A673 (cell line): ENCODE measurements at regions of chr11 and their contacts with region 1.

Region 1: DNA sequence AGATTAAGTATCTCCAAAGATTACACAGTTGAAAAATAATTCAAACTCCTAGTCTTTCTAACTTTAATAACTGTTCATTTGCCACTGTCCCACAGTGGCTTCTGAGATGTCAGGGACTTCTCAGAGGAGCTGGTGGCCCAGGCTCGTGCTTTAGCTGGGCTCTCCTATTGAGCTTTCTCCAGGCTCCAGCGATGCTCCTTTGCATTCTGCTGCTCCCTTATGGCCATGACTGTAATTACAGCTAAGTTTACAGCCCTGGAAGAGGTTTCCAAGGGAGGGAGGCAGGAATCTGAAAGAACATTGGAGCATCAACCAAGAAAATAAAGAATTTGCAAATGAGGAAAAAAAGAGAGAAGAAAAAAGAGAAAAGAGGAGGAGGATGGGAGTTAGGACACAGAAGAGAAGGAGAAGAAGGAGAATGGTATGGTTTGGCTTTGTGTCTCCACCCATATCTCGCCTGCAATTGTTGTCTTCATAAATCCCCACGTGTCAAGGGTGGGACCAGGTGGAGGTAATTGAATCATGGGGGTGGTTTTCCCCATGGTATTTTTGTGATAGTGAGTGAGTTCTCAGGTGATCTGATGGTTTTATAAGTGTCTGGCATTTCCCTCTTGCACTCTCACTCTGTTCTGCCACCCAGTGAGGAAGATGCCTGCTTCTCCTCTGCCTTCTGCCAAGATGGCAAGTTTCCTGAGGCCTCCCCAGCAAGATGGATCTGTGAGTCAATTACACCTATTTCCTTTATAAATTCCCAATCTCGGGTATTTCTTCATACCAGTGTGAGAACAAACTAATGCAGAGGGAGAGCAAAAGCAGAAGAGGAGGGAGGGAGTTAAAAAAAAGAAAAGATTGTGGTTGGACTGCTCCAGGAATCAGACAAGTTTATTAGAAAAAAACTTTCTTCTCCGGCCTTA is 857.0 kb downstream of the KCNA4 start:
- DNase-seq: peak; percentile 98
- H3K4me3 ChIP-seq: no peak overlapping the region
- H3K27ac ChIP-seq: no peak overlapping the region
- H3K4me1 ChIP-seq: peaks cover 35% of the 10 kb centered on the region
- H3K27me3 ChIP-seq: no peaks in the 10 kb centered on the region
- CTCF ChIP-seq: peak; percentile 100

Region 2: GRCh38 chr11:27698872-27699474 is 1460.8 kb before region 1 on chr11:
- CTCF ChIA-PET with region 1: interaction called, 23 read pairs
- POLR2A ChIA-PET with region 1: interaction called, 3 read pairs
- intact Hi-C with region 1: loop called (anchors 1 kb)
- DNase-seq: peak; percentile 97
- H3K4me3 ChIP-seq: peak overlapping the region; percentile 40
- H3K27ac ChIP-seq: no peak overlapping the region
- H3K4me1 ChIP-seq: peaks cover 27% of the 10 kb centered on the region
- H3K27me3 ChIP-seq: peaks cover 97% of the 10 kb centered on the region
- CTCF ChIP-seq: peak; percentile 100

Region 3: GRCh38 chr11:27839226-27839870 is 1320.5 kb before region 1 on chr11:
- CTCF ChIA-PET with region 1: interaction called, 4 read pairs
- POLR2A ChIA-PET with region 1: no interaction called
- intact Hi-C with region 1: loop called (anchors 5 kb)
- DNase-seq: peak; percentile 79
- H3K4me3 ChIP-seq: no peak overlapping the region
- H3K27ac ChIP-seq: no peak overlapping the region
- H3K4me1 ChIP-seq: no peaks in the 10 kb centered on the region
- H3K27me3 ChIP-seq: peaks cover 57% of the 10 kb centered on the region
- CTCF ChIP-seq: peak; percentile 88

Region 4: DNA sequence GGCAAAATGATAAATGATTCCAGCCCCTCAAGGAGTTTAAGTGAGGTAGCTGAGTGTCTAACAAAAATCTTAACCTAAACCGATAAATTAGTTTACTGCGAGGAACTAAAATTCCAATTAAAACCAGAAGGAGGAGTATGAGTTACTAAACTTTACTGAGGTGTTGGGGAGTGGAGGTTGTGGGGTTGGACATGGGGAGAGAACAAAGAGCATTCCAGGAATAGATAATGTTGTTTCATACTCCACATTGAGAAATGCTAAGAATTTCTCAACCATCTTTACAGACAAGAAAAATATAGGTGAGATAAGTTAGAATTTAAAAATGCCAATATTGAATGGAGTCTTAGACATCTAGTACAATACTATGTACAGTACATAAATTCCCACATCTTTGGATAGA is 563.0 kb before region 1 on chr11:
- CTCF ChIA-PET with region 1: interaction called, 10 read pairs
- POLR2A ChIA-PET with region 1: no interaction called
- intact Hi-C with region 1: no loop called
- DNase-seq: no peak
- H3K4me3 ChIP-seq: no peak overlapping the region
- H3K27ac ChIP-seq: no peak overlapping the region
- H3K4me1 ChIP-seq: no peaks in the 10 kb centered on the region
- H3K27me3 ChIP-seq: peaks cover 48% of the 10 kb centered on the region
- CTCF ChIP-seq: no peak; the same call in 1 of the 2 replicates

Region 5: DNA sequence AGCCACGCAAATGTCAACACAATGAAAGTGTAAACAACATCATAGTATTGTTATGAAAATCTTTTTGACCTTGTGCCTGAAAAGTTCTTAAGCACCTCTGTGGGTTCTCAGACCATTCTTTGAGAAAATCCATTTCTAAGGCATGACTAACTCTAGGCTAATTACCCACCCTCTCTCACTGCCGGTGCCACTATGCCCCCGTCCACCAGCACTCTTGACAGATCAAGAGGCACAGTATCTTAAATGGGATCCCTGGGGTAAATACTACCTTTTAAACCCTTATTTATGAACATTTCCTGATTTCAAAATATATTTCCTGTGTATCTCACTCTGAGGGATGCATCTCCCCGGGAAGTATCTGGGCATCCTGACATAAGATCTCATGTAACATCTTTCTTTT is 444.1 kb before region 1 on chr11:
- CTCF ChIA-PET with region 1: no interaction called
- POLR2A ChIA-PET with region 1: no interaction called
- intact Hi-C with region 1: loop called (anchors 5 kb)
- DNase-seq: peak; percentile 97
- H3K4me3 ChIP-seq: no peak overlapping the region
- H3K27ac ChIP-seq: no peak overlapping the region
- H3K4me1 ChIP-seq: peaks cover 18% of the 10 kb centered on the region
- H3K27me3 ChIP-seq: no peaks in the 10 kb centered on the region
- CTCF ChIP-seq: no peak

Region 6: GRCh38 chr11:28951191-28951590 is 208.6 kb before region 1 on chr11:
- CTCF ChIA-PET with region 1: no interaction called
- POLR2A ChIA-PET with region 1: no interaction called
- intact Hi-C with region 1: no loop called
- DNase-seq: no peak
- H3K4me3 ChIP-seq: no peak overlapping the region
- H3K27ac ChIP-seq: no peak overlapping the region
- H3K4me1 ChIP-seq: no peaks in the 10 kb centered on the region
- H3K27me3 ChIP-seq: no peaks in the 10 kb centered on the region
- CTCF ChIP-seq: no peak

Region 7: GRCh38 chr11:28981381-28981780 is 178.4 kb before region 1 on chr11:
- CTCF ChIA-PET with region 1: interaction called, 4 read pairs
- POLR2A ChIA-PET with region 1: no interaction called
- intact Hi-C with region 1: loop called (anchors 5 kb)
- DNase-seq: peak; percentile 95
- H3K4me3 ChIP-seq: no peak overlapping the region
- H3K27ac ChIP-seq: no peak overlapping the region
- H3K4me1 ChIP-seq: peaks cover 14% of the 10 kb centered on the region
- H3K27me3 ChIP-seq: peaks cover 45% of the 10 kb centered on the region
- CTCF ChIP-seq: no peak

Region 8: DNA sequence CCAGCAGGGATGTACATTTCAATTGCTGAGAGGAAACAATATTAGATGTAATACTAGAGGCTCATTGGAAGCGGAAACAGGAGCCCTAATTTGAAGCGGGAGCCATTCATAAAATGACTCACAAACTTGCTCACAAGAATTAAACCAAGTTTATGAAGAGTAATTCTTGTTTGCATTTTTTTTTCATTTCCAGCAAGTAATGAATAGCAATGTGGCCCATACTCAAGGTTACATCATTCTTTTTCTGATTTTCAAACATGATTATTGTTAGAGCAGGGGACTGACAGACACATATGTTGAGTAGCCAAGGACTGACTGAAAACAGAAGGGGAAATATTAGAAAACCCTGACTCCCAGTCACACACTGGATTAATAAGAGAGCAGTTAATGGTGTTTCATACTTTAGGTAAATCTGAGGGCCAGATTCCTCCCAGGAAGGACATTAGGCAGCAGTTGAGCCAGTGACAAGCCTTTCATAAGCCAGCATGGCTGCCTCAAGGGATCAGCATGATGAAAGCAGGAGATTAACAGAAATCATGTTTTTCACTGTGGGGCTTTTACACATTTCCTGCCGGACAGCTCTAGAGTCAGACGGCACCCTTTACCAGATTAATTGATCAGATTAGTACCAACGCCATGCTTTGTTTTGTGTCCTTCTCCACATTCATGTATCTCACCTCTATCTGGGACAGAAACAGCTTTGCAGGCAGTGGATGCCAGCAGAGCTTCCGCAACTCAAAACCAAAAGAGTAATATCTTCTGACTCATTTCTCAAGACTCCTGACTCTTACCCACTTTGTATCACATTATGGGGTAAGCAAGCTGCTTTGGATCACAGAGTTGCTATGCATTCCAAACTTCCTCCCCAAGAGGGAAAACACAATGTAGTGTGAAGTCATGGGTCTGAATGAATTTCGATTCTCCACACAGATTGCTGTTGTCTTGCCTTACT is 25.4 kb after region 1 on chr11:
- CTCF ChIA-PET with region 1: interaction called, 7 read pairs
- POLR2A ChIA-PET with region 1: interaction called, 3 read pairs
- intact Hi-C with region 1: loop called (anchors 1 kb)
- DNase-seq: peak; percentile 100
- H3K4me3 ChIP-seq: peak overlapping the region; percentile 17
- H3K27ac ChIP-seq: peak overlapping the region; percentile 95
- H3K4me1 ChIP-seq: peaks cover 51% of the 10 kb centered on the region
- H3K27me3 ChIP-seq: no peaks in the 10 kb centered on the region
- CTCF ChIP-seq: no peak

Region 9: GRCh38 chr11:29490951-29491350 is 331.1 kb after region 1 on chr11:
- CTCF ChIA-PET with region 1: no interaction called
- POLR2A ChIA-PET with region 1: no interaction called
- intact Hi-C with region 1: no loop called
- DNase-seq: no peak
- H3K4me3 ChIP-seq: no peak overlapping the region
- H3K27ac ChIP-seq: no peak overlapping the region
- H3K4me1 ChIP-seq: no peaks in the 10 kb centered on the region
- H3K27me3 ChIP-seq: peaks cover 11% of the 10 kb centered on the region
- CTCF ChIP-seq: no peak